Activated naive CD4-positive, alpha-beta T cell treated with anti-CD3 and anti-CD28 coated beads for 36 hours (primary cell): ENCODE measurements at regions of chr15 and their contacts with region 1.

Region 1: DNA sequence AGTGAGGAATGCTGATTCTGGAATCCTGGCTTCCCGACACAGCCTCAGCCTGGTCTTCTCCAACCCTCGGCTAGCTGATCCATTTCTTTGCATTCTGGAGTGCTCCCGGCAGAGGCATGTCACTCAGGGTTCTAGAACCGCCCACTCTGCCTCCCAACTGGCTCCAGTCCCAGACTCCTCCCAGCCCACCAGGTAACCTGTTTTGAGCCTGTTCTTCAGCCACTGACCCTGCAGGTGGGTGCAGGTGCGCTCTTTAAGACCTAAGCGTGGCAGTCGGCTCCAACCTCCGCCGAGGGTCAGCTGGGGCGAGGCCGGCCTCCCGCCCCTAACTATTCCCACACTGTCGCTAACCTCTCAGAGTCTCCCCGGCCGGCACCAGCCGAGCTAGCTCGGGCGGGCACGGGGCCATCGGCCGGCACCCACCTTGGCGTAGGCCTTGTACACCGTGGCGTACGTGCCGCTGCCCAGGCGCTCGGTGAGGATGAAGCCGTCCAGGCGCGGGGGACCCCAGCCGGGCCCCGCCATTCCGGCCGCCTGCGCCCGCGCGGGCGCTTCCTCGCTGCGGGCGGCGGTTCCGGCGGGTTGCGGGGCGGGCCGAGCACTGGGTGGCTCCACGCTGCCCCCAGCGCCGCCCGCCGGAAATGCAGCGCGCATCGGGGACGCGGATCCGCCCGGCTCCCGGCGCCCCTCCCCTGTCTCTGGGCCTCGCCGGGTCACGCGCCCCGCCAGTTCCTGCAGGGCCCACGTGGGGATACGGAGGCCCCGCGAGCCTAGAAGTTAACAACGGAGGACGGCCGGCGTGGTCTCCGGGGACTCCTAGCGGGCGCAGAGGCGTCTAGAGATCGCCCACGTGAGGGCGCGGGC is at the start of gene ULK3:
- DNase-seq: peak; percentile 93
- H3K4me3 Mint-ChIP-seq: peak within 1 kb of the TSS; percentile 86
- H3K27ac Mint-ChIP-seq: peak within 1 kb of the TSS; percentile 89
- H3K4me1 Mint-ChIP-seq: peaks cover 44% of the 10 kb centered on the region
- H3K27me3 Mint-ChIP-seq: no peaks in the 10 kb centered on the region
- total RNA-seq, gene ULK3: 58.9 to 69.2 TPM

Region 2: GRCh38 chr15:74615508-74616365 is 227.1 kb before region 1 on chr15 and contains the start of gene CLK3:
- CTCF ChIA-PET with region 1: no interaction called
- intact Hi-C with region 1: loop called (anchors 2 kb)
- DNase-seq: peak; percentile 97
- H3K4me3 Mint-ChIP-seq: peak within 1 kb of the TSS; percentile 90
- H3K27ac Mint-ChIP-seq: peak within 1 kb of the TSS; percentile 95
- H3K4me1 Mint-ChIP-seq: peaks cover 39% of the 10 kb centered on the region
- H3K27me3 Mint-ChIP-seq: no peaks in the 10 kb centered on the region
- total RNA-seq, gene CLK3: 124 TPM

Region 3: DNA sequence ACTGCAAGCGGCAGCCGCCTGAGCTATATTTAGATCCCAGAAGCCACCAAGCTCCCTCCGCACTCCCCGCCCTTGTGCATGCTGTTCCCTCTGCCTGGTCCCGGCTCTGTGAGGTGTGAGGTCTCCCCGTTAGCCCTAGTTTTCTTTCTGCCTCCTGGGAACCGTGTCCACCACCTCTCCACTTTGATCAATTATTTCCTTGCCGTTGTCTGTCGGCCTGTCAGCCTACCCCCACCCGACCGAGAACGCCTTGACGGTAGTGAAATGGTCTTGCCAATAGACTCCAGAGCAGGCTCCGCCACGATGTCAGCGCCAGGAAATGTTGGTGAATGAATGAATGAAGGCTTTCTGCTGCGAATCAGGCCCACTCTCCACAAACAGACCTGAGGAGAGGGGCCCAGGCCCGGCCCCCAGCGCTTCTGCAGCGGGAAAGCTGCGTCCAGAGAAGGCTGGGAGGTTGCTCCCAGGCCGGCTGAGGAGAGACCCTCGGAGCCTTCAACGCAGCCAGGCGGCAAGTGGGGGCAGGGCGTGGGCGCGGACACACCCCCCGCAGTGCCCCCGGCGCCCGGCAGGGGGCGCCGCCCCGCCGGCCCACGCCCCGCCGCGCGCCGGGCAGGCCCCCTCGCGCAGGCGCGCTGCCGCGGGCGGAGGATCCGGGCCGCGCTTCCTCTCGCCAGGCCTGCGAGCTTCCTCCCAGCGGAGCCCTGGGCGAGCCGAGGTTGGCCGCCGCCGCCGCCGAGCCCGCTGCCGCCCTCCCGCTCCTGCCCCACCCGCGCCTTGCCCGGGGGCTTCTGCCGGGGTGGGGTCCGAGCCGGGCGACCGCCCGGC is 61.2 kb before region 1 on chr15 and contains the start of gene CSK:
- CTCF ChIA-PET with region 1: interaction called, 10 read pairs
- intact Hi-C with region 1: loop called (anchors 2 kb)
- DNase-seq: peak; percentile 74
- H3K4me3 Mint-ChIP-seq: peak within 1 kb of the TSS; percentile 93
- H3K27ac Mint-ChIP-seq: peak within 1 kb of the TSS; percentile 99
- H3K4me1 Mint-ChIP-seq: peaks cover 46% of the 10 kb centered on the region
- H3K27me3 Mint-ChIP-seq: no peaks in the 10 kb centered on the region
- total RNA-seq, gene CSK: 272 to 282 TPM

Region 4: GRCh38 chr15:74873036-74873755 is 30.4 kb after region 1 on chr15 and contains the start of gene SCAMP2:
- CTCF ChIA-PET with region 1: interaction called, 4 read pairs
- intact Hi-C with region 1: loop called (anchors 1 kb)
- DNase-seq: peak; percentile 92
- H3K4me3 Mint-ChIP-seq: peak within 1 kb of the TSS; percentile 98
- H3K27ac Mint-ChIP-seq: peak within 1 kb of the TSS; percentile 92
- H3K4me1 Mint-ChIP-seq: peaks cover 42% of the 10 kb centered on the region
- H3K27me3 Mint-ChIP-seq: no peaks in the 10 kb centered on the region
- total RNA-seq, gene SCAMP2: 60.6 TPM

Region 5: GRCh38 chr15:74937596-74938296 is 94.9 kb after region 1 on chr15 and contains the start of gene COX5A:
- CTCF ChIA-PET with region 1: no interaction called
- intact Hi-C with region 1: loop called (anchors 1 kb)
- DNase-seq: peak; percentile 95
- H3K4me3 Mint-ChIP-seq: peak within 1 kb of the TSS; percentile 90
- H3K27ac Mint-ChIP-seq: peak within 1 kb of the TSS; percentile 89
- H3K4me1 Mint-ChIP-seq: peaks cover 33% of the 10 kb centered on the region
- H3K27me3 Mint-ChIP-seq: no peaks in the 10 kb centered on the region
- total RNA-seq, gene COX5A: 346 to 348 TPM

Region 6: DNA sequence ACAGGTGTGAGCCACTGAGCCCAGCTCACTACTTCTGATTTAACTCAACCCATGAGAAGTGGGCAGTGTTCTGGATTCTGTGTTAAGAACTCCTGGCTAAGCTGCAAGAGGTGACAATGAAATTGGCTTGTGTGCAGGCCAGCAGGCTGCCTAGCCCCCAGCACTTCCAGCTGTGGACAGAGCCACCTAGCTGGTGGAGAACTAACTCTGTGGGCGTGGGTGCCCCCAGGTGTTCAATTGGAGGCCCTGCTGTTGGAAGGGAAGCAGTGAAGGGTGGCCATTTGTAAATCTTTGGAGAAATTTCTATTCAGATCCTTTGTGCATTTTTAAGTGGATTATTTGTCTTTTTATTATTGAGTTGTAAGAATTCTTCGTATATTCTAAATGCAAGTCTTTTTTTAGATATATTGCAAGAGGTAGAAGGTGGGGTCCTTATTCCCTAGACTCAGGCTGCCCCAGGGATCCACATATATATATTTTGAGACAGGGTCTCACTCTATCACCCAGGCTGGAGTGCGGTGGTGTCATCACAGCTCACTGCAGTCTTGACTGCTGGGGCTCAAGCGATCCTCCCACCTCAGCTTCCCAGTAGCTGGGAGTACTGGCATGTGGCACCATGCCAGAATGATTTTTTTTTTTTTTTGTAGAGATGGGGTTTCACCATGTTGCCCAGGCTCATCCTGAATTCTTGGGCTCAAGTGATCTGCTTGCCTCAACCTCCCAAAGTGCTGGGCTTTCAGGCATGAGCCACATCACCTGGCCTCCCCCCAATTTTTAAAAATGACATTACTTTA is 145.4 kb after region 1 on chr15:
- CTCF ChIA-PET with region 1: no interaction called
- intact Hi-C with region 1: loop called (anchors 1 kb)
- DNase-seq: peak; percentile 73
- H3K4me3 Mint-ChIP-seq: no peak overlapping the region
- H3K27ac Mint-ChIP-seq: no peak overlapping the region
- H3K4me1 Mint-ChIP-seq: peaks cover 11% of the 10 kb centered on the region
- H3K27me3 Mint-ChIP-seq: peaks cover 6% of the 10 kb centered on the region

Region 7: DNA sequence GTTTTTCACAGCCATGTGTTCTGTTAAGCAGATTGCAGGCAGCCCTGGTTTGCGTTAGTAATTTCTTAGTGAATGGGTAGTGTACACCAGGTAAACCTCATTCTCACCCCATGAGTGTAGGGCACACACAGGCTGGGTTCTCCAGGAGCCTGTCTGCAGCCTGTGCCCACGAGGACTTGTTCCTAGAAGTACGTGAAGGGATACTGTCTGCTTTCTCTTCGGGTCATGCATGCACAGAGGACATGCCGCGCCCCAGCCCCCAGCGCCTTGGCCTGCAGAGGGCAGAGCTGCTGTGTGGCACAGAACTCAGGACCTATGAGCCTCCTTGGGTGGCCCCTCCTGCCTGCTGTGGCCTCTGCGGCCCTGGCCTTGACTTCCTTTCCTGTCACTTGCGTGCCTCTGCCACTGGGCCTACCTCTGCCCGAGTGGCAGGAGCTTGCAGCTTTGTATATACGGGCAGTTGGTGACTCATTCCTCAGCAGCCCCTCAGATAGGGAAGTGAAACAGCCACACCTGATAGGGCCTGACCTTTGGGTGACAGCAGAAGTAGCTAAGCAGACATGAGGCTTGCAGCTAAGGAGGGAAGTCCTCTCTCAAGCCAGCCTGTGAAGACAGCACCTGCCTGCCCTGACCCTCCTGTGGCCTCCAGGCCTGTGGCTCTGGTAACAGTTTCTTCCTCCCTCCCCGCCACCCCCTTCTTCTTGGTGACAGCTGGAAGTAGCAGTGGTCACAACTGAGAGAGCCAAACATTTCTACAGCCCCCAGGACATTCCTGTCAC is 200.1 kb after region 1 on chr15:
- CTCF ChIA-PET with region 1: no interaction called
- intact Hi-C with region 1: no loop called
- DNase-seq: peak; percentile 60
- H3K4me3 Mint-ChIP-seq: no peak overlapping the region
- H3K27ac Mint-ChIP-seq: no peak overlapping the region
- H3K4me1 Mint-ChIP-seq: peaks cover 7% of the 10 kb centered on the region
- H3K27me3 Mint-ChIP-seq: no peaks in the 10 kb centered on the region